ENCODE measurements at regions of chr1 and their contacts with region 1.

Region 1: DNA sequence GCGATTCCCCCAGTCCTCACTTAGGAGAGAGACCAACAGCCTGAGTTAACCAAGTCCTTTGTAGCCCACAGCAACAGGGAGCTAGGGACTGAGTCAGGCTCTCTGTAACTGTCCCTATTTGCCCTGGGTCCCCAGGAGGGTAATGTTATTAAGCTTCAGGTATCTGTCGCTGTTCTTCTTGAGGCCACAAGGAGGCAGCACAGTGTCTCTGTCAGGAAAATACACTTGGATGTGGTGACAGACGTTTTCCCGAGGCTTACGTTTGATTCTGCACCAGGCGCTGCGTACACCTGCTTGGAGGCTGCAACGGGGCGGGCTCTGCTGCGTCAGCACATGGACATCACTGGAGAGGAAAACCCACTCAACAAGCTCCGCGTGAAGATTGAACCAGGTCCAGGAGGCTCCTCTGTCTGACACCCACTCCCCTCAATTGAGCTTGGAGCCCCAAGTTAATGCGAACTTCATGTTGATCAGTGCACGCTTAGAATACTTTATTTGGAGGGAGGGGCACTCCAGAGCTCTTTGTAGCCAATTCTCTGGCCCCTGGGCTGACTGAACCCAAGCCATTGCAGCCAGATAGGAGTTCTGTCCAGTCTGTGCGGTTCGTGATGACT is 10.7 kb upstream of the ELF3 start:
- DNase-seq: peak; percentile 32
- H3K4me3 Mint-ChIP-seq: no peak overlapping the region
- H3K27ac Mint-ChIP-seq: no peak overlapping the region
- H3K4me1 Mint-ChIP-seq: no peaks in the 10 kb centered on the region
- H3K27me3 Mint-ChIP-seq: no peaks in the 10 kb centered on the region

Region 2: GRCh38 chr1:201989354-201990128 is 10.2 kb before region 1 on chr1:
- CTCF ChIA-PET with region 1: interaction called, 12 read pairs
- POLR2A ChIA-PET with region 1: no interaction called
- DNase-seq: no peak
- H3K4me3 Mint-ChIP-seq: no peak overlapping the region
- H3K27ac Mint-ChIP-seq: no peak overlapping the region
- H3K4me1 Mint-ChIP-seq: peaks cover under 1% of the 10 kb centered on the region
- H3K27me3 Mint-ChIP-seq: no peaks in the 10 kb centered on the region

Measured in activated CD4-positive, alpha-beta T cell treated with anti-CD3 and anti-CD28 coated beads, Interleukin-2, amount 10 ng/mL, durations not matched to agents 7 days and 5 days (primary cell).